ENCODE measurements at regions of chr7 and their contacts with region 1.

Region 1: GRCh38 chr7:69942573-69942972 is 344.3 kb downstream of the AUTS2 start:
- DNase-seq: no peak
- H3K4me3 ChIP-seq: no peak overlapping the region
- CTCF ChIP-seq: no peak

Region 2: DNA sequence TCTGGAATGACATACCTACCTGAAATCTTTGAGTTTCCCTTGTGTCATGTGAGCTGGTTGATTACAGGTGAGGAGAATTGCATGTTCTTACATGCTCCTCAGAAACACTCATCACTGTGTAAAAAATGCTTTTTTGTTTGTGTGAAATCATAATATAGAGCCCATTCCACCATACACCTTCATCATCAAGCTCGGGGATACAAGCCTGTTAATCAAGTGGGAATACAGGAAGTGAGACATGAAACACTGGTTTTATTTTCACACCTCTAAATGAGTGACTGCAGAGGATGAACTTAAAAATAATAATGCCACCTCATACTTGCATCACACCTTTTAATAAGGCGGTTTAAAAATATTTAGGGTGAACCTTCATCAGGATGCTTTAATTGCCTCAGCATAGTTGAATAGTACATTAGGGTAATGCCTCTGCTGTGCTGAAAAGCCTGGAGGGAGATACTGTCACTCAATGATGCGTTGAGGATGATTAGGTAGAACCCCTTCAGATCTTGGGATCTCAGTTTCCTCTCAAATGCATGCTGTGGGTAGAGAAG is 179.7 kb before region 1 on chr7:
- CTCF ChIA-PET with region 1: no interaction called
- POLR2A ChIA-PET with region 1: no interaction called
- DNase-seq: no peak
- H3K4me3 ChIP-seq: no peak overlapping the region
- CTCF ChIP-seq: no peak

Region 3: GRCh38 chr7:69932034-69932628 is 10.4 kb before region 1 on chr7:
- CTCF ChIA-PET with region 1: interaction called, 12 read pairs
- POLR2A ChIA-PET with region 1: no interaction called
- DNase-seq: peak; percentile 14
- H3K4me3 ChIP-seq: no peak overlapping the region
- CTCF ChIP-seq: peak; percentile 73

Region 4: GRCh38 chr7:69962186-69963065 is 19.9 kb after region 1 on chr7:
- CTCF ChIA-PET with region 1: no interaction called
- POLR2A ChIA-PET with region 1: no interaction called
- DNase-seq: no peak
- H3K4me3 ChIP-seq: no peak overlapping the region
- CTCF ChIP-seq: no peak

Measured in AG04449 (cell line).